Activated CD4-positive, alpha-beta T cell treated with anti-CD3 and anti-CD28 coated beads for 36 hours (primary cell): ENCODE measurements at regions of chr9 and their contacts with region 1.

Region 1: DNA sequence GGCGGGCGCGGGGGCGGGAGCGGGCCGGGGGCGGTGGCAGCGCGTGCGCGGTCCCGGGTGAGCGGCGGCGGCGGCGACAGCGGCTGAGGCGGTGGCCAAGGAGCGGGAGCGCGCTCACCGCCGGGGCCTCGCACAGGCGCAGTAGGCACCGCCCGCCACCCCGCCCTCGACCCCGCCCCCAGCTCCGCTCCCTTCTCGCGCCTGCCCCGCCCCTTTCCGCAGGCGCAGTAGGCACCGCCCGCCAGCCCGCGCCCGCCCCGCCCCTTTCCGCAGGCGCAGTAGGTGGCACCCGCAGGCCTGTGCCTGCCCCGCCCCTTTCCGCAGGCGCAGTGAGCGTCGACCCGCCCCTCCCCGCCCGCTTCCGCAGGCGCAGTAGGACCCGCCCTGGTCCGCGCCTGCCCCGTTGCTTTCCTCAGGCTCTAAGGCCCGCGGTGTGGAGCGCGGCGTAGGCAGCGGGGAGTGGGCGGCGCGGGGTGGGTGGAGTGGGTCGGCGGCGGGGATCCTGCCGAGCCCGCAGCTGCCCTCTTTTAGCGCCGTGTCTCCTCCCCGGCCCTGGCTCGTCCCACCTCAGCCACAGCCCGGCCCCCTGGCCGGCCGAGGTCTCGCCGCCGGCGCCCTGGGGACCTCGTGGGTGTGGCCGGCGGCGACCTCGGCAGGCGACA is at the start of gene CAMSAP1:
- DNase-seq: peak; percentile 98
- ATAC-seq: peak; percentile 81
- H3K4me3 Mint-ChIP-seq: peak within 1 kb of the TSS; percentile 81
- H3K27ac Mint-ChIP-seq: peak within 1 kb of the TSS; percentile 90
- H3K4me1 Mint-ChIP-seq: peaks cover 62% of the 10 kb centered on the region
- H3K27me3 Mint-ChIP-seq: no peaks in the 10 kb centered on the region
- total RNA-seq, gene CAMSAP1: 31.2 to 33.4 TPM

Region 2: DNA sequence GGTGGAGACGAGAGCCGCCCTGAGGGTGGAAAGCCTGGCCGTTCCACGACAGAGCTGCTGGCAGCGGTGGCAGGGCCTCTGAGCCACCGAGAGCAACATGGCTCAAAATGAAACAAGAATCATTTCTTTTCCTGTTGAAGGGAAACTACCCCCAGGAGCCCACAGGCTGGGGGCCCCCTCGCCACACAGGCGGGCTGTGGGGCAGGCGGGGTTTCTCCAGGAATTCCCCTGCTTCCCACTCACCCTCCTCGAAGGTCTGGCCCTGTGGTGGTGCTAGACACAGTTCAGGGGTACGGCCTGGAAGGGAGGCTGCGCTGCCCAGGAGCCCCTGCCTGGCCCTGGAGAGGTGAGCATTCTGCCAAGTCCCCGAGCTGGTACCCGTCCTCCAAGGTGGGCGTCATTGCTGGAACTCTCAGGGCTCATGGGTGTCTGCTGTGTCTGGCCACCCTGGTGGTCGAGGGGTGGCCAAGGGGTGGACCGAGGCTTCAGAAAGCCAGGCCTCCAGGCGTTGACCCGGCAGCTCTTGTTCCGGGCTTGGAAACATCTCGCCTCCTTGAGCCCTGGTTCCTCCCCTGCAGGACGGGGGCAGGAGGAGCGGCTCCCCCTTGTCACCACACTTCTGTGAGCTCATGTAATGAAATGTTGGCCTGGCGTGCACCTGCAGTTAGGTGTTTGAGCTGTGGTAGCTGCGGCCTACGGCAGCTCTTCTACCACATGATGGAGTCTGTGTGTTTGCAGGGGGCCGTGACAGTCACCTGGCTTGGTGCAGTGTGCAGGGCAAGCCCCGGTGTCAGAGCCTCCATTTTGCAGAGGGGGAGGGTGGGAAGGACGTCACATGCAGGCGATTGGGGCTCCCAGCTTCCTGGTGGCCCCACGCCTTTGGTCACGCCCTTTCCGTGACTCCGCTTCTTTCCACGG is 1516.0 kb before region 1 on chr9:
- CTCF ChIA-PET with region 1: no interaction called
- POLR2A ChIA-PET with region 1: no interaction called
- intact Hi-C with region 1: loop called in 1 of 2 experiments (anchors 2 kb)
- DNase-seq: peak; percentile 89
- ATAC-seq: peak; percentile 69
- H3K4me3 Mint-ChIP-seq: peak overlapping the region; percentile 75
- H3K27ac Mint-ChIP-seq: peak overlapping the region; percentile 95
- H3K4me1 Mint-ChIP-seq: peaks cover 64% of the 10 kb centered on the region
- H3K27me3 Mint-ChIP-seq: peaks cover 11% of the 10 kb centered on the region

Region 3: GRCh38 chr9:135403813-135404695 is 503.5 kb before region 1 on chr9:
- CTCF ChIA-PET with region 1: no interaction called
- POLR2A ChIA-PET with region 1: no interaction called
- intact Hi-C with region 1: no loop called
- DNase-seq: no peak
- ATAC-seq: no peak
- H3K4me3 Mint-ChIP-seq: no peak overlapping the region
- H3K27ac Mint-ChIP-seq: no peak overlapping the region
- H3K4me1 Mint-ChIP-seq: no peaks in the 10 kb centered on the region
- H3K27me3 Mint-ChIP-seq: no peaks in the 10 kb centered on the region

Region 4: GRCh38 chr9:135926402-135927194 is 19.0 kb after region 1 on chr9:
- CTCF ChIA-PET with region 1: interaction called, 5 read pairs
- POLR2A ChIA-PET with region 1: interaction called, 12 read pairs
- intact Hi-C with region 1: loop called (anchors 1 kb)
- DNase-seq: peak; percentile 95
- ATAC-seq: peak; percentile 91
- H3K4me3 Mint-ChIP-seq: peak overlapping the region; percentile 19
- H3K27ac Mint-ChIP-seq: peak overlapping the region; percentile 94
- H3K4me1 Mint-ChIP-seq: peaks cover 39% of the 10 kb centered on the region
- H3K27me3 Mint-ChIP-seq: no peaks in the 10 kb centered on the region

Region 5: DNA sequence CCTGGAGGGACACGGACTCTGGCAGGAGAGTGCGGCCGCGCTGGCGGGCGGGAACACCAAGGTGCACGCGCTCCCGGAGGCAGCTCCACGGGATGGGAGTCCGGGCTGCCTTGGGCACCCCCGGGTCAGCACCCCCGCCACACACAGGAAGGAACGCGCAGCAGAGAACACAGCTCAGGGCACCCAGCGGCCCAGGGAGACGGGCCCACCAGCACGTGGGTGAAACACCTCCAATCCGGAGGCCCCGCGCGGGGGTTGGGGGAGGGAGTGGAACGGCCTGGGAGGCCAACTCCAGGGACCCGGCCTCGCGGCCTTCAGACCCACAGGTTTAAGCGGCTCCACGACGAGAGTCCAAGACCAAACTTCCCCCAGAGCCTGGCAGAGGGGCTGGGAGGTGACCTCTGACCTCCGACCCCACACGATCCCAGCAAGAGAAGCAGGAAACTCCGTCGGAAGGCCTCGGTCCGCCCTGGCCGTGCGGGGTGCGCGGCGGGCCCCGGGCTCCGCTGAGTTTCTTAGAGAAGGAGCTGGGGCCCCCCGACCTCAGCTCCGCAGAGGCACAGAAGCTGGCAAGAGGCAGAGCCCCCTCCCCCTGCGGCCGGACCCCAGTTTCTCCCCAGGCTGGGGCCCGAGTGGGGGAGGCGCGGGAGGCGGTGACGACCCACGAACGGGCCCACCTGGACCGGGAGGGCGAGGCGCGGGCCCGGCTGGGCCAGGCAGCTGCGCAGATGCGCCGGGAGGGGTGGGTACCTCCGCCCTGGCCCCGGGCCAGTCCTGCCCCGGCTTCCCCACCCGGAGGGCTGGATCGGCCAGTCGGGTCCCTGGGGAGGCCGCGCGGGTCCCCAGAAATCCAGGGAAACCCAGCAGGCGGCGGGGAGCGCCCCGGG is 186.7 kb after region 1 on chr9:
- CTCF ChIA-PET with region 1: no interaction called
- POLR2A ChIA-PET with region 1: no interaction called
- intact Hi-C with region 1: loop called in 1 of 2 experiments (anchors 5 kb)
- DNase-seq: peak; percentile 79
- ATAC-seq: peak; percentile 74
- H3K4me3 Mint-ChIP-seq: peak overlapping the region; percentile 68
- H3K27ac Mint-ChIP-seq: peak overlapping the region; percentile 63
- H3K4me1 Mint-ChIP-seq: peaks cover 6% of the 10 kb centered on the region
- H3K27me3 Mint-ChIP-seq: peaks cover 5% of the 10 kb centered on the region

Region 6: GRCh38 chr9:136363606-136364370 is 456.2 kb after region 1 on chr9 and contains the start of gene DNLZ:
- CTCF ChIA-PET with region 1: no interaction called
- POLR2A ChIA-PET with region 1: no interaction called
- intact Hi-C with region 1: loop called in 1 of 2 experiments (anchors 1 kb)
- DNase-seq: peak; percentile 93
- ATAC-seq: peak; percentile 73
- H3K4me3 Mint-ChIP-seq: peak within 1 kb of the TSS; percentile 79
- H3K27ac Mint-ChIP-seq: peak within 1 kb of the TSS; percentile 80
- H3K4me1 Mint-ChIP-seq: peaks cover 10% of the 10 kb centered on the region
- H3K27me3 Mint-ChIP-seq: no peaks in the 10 kb centered on the region
- total RNA-seq, gene DNLZ: 11.7 to 12.8 TPM

Region 7: GRCh38 chr9:136700959-136701667 is 793.6 kb after region 1 on chr9:
- CTCF ChIA-PET with region 1: no interaction called
- POLR2A ChIA-PET with region 1: no interaction called
- intact Hi-C with region 1: loop called in 1 of 2 experiments (anchors 5 kb)
- DNase-seq: peak; percentile 92
- ATAC-seq: peak; percentile 97
- H3K4me3 Mint-ChIP-seq: peak overlapping the region; percentile 62
- H3K27ac Mint-ChIP-seq: peak overlapping the region; percentile 91
- H3K4me1 Mint-ChIP-seq: peaks cover 20% of the 10 kb centered on the region
- H3K27me3 Mint-ChIP-seq: peaks cover 20% of the 10 kb centered on the region